ENCODE measurements at regions of chr20 and their contacts with region 1.

Region 1: GRCh38 chr20:62675156-62675876 is 33.0 kb downstream of the SLCO4A1 start:
- DNase-seq: peak; percentile 54
- H3K4me3 ChIP-seq: no peak overlapping the region
- H3K27ac ChIP-seq: no peak overlapping the region
- H3K4me1 ChIP-seq: peaks cover 6% of the 10 kb centered on the region; the same call in 1 of the 2 replicates
- H3K27me3 ChIP-seq: no peaks in the 10 kb centered on the region; the same call in 1 of the 2 replicates

Region 2: GRCh38 chr20:62539198-62540045 is 135.9 kb before region 1 on chr20:
- in situ Hi-C with region 1: no loop called
- DNase-seq: no peak
- H3K4me3 ChIP-seq: no peak overlapping the region
- H3K27ac ChIP-seq: no peak overlapping the region
- H3K4me1 ChIP-seq: no peaks in the 10 kb centered on the region
- H3K27me3 ChIP-seq: peaks cover 39% of the 10 kb centered on the region

Region 3: DNA sequence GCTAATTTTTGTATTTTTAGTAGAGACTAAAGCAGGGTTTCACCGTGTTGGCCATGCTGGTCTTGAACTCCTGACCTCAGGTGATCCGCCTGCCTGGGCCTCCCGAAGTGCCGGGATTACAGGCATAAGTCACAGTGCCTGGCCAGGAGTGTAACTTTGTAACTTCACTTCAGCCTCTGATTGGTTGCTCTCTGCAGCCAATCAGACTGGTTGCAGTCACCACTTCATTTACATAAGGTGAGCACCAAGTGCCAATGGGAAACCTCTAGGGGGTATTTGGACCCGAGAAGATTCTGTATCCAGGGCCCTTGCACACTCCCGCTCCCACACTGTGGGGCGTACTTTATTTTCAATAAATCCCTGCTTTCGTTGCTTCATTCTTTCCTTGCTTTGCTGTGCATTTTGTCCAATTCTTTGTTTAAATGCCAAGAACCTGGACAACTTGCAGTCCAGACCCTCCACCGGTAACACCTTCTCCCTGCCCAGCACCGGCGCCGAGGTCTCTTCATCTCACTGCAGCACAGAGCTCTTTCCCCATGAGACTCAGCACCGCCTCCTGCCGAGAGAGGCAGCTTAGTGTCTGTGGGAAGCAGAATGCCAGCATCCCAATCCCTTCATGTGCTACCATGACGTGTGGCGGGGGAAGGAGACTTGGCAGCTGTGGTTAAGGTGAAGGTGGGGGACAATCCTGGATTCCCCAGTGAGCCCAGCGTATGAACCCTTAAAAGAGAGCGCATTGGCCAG is 107.0 kb after region 1 on chr20:
- in situ Hi-C with region 1: loop called (anchors 10 kb)
- DNase-seq: peak; percentile 35
- H3K4me3 ChIP-seq: no peak overlapping the region
- H3K27ac ChIP-seq: no peak overlapping the region
- H3K4me1 ChIP-seq: no peaks in the 10 kb centered on the region
- H3K27me3 ChIP-seq: no peaks in the 10 kb centered on the region

Measured in GM23248 (cell line).